HepG2 (cell line): ENCODE measurements at regions of chr2 and their contacts with region 1.

Region 1: GRCh38 chr2:163667064-163667887 is 68.5 kb downstream of the FIGN start:
- DNase-seq: peak; percentile 81
- ATAC-seq: peak; percentile 89
- H3K4me3 ChIP-seq: no peak overlapping the region; a peak in 1 of 6 replicates
- H3K27ac ChIP-seq: peak overlapping the region; percentile 66
- H3K4me1 ChIP-seq: peaks cover 43% of the 10 kb centered on the region
- H3K27me3 ChIP-seq: no peaks in the 10 kb centered on the region
- CTCF ChIP-seq: no peak
- EP300 ChIP-seq: peak in 1 of 2 experiments; percentile 72; a peak in 2 of 4 replicates
- POLR2A ChIP-seq: no peak
- RAD21 ChIP-seq: no peak

Region 2: GRCh38 chr2:163717993-163718680 is 50.9 kb after region 1 on chr2:
- CTCF ChIA-PET with region 1: no interaction called
- POLR2A ChIA-PET with region 1: no interaction called
- in situ Hi-C with region 1: no loop called
- intact Hi-C with region 1: loop called (anchors 5 kb)
- DNase-seq: peak; percentile 16
- ATAC-seq: peak; percentile 79
- H3K4me3 ChIP-seq: no peak overlapping the region
- H3K27ac ChIP-seq: no peak overlapping the region
- H3K4me1 ChIP-seq: peaks cover 18% of the 10 kb centered on the region
- H3K27me3 ChIP-seq: no peaks in the 10 kb centered on the region
- CTCF ChIP-seq: no peak
- EP300 ChIP-seq: no peak
- POLR2A ChIP-seq: no peak
- RAD21 ChIP-seq: no peak

Region 3: GRCh38 chr2:163943403-163944346 is 276.4 kb after region 1 on chr2:
- CTCF ChIA-PET with region 1: no interaction called
- POLR2A ChIA-PET with region 1: no interaction called
- in situ Hi-C with region 1: no loop called
- intact Hi-C with region 1: loop called (anchors 10 kb)
- DNase-seq: peak; percentile 96
- ATAC-seq: peak; percentile 99
- H3K4me3 ChIP-seq: peak overlapping the region in 1 of 3 experiments; percentile 8; a peak in 3 of 6 replicates
- H3K27ac ChIP-seq: peak overlapping the region; percentile 51
- H3K4me1 ChIP-seq: peaks cover 29% of the 10 kb centered on the region
- H3K27me3 ChIP-seq: no peaks in the 10 kb centered on the region
- CTCF ChIP-seq: no peak
- EP300 ChIP-seq: peak in 1 of 2 experiments; percentile 72; a peak in 2 of 4 replicates
- POLR2A ChIP-seq: no peak
- RAD21 ChIP-seq: no peak